Activated naive CD4-positive, alpha-beta T cell treated with anti-CD3 and anti-CD28 coated beads for 36 hours (primary cell): ENCODE measurements at regions of chr20 and their contacts with region 1.

Region 1: DNA sequence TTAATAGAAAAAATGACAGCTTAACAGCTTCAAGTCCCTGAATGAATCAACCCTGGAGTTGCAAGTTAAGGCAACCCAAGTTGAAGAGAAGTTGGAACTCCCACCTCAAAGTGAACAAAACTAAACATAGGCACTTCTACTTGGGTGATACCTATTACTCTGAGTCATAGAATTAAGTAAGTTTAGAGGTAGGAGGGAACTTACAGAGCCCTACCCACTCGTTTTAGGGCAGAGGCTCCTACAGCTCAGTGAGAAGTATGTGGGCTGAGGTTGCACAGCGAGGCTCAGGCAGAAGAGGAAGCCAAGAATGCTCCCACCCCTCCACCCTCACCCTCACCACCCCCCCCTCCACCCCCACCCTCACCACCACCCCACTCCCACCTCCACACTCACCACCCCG is 42.2 kb downstream of the NFATC2 start:
- DNase-seq: peak; percentile 70
- H3K4me3 Mint-ChIP-seq: no peak overlapping the region
- H3K27ac Mint-ChIP-seq: peak overlapping the region; percentile 87
- H3K4me1 Mint-ChIP-seq: peaks cover 68% of the 10 kb centered on the region
- H3K27me3 Mint-ChIP-seq: no peaks in the 10 kb centered on the region

Region 2: GRCh38 chr20:51385646-51386530 is 114.4 kb before region 1 on chr20:
- CTCF ChIA-PET with region 1: no interaction called
- intact Hi-C with region 1: loop called (anchors 1 kb)
- DNase-seq: peak; percentile 61
- H3K4me3 Mint-ChIP-seq: no peak overlapping the region
- H3K27ac Mint-ChIP-seq: no peak overlapping the region
- H3K4me1 Mint-ChIP-seq: peaks cover 48% of the 10 kb centered on the region
- H3K27me3 Mint-ChIP-seq: no peaks in the 10 kb centered on the region

Region 3: DNA sequence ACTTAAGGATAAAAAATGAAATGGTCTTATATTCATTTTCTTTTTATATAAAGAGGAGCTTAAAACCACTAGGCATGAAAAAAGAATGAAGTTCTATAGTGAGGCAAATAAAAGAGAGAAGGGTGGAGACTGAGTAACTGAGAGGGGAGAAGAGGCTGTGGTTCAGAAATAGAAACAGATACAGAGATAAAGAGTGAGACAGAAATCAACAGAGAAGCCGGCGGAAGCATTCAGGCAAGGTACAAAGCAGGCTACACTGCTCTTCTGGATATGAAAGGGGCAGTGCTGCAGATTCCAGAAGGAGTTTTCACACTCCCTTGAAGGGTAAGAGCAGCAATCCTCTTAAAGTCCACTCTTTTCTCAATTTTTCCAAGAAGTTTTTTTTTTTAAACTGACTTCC is 12.3 kb after region 1 on chr20:
- CTCF ChIA-PET with region 1: interaction called, 6 read pairs
- intact Hi-C with region 1: loop called (anchors 1 kb)
- DNase-seq: peak; percentile 45
- H3K4me3 Mint-ChIP-seq: no peak overlapping the region
- H3K27ac Mint-ChIP-seq: peak overlapping the region; percentile 74
- H3K4me1 Mint-ChIP-seq: peaks cover 75% of the 10 kb centered on the region
- H3K27me3 Mint-ChIP-seq: no peaks in the 10 kb centered on the region